ENCODE measurements at regions of chr14 and their contacts with region 1.

Region 1: GRCh38 chr14:69586404-69586803 is 11.7 kb upstream of the CCDC177 start:
- DNase-seq: no peak
- CTCF ChIP-seq: no peak

Region 2: DNA sequence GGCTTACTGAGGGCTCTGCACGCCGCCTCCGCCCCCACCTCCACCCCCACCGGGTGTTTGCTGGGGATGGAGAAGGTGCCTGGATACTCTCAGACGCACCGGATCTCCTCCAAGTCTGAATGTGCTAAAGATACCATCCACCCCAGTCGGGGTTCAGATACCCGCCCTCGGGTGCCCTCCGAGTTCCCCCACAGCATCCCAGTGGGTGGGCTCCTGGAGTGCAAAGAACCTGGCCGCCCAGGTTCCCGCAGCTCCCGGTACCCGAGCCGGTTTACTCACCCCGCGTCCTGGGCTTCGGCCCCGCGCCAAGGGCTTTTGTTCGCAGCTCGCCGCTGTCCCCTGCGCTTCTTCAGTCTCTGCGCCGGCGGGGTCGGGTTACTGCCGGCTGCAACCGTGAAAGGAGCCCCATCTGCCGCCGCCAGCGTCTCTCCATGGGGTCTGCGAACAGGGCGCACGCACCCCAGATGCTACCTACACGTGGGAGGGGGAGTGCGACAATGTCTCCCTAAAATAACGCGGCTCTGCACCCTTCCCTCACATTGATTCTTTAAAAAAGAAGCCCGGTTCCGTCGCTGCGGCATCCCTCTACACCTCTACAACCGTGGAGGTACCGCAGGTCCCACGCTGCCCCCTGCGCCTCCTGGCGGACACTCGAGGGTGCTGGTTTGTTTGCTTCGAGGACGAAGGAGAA is 12.0 kb before region 1 on chr14 and contains the start of gene CCDC177:
- CTCF ChIA-PET with region 1: interaction called, 15 read pairs
- POLR2A ChIA-PET with region 1: interaction called, 3 read pairs
- DNase-seq: peak; percentile 83
- CTCF ChIP-seq: peak; percentile 90

Region 3: DNA sequence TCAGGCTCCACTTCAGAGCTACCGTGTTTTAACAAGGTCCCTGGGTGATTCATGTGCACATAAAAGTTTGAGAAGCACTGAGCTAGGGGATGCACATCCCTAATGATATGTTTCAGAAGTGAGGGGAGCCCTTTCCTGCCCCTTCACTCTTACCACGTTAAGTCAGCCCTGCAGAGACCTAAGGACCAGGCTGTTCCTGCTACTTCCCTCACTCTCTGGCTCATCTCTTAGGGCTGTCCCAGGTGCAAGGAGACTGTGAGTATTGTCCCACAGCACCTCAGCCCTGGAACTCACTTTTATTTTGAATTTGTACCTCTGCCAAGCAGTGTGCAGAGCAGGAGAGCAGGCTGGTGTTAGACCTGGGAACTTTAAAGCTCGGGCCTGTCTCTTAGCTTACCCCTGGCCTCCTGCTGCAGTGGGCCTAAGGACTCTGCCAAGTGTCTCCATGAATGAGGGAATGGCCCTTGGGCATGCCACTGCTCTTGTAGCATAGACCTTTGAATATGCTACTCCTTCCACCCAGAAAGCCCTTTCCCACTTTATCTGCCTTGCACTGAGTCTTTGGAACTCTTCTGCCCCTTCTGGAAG is 14.0 kb after region 1 on chr14:
- CTCF ChIA-PET with region 1: interaction called, 27 read pairs
- POLR2A ChIA-PET with region 1: no interaction called
- DNase-seq: no peak
- CTCF ChIP-seq: no peak

Region 4: GRCh38 chr14:69625299-69626131 is 39.1 kb after region 1 on chr14:
- CTCF ChIA-PET with region 1: no interaction called
- POLR2A ChIA-PET with region 1: no interaction called
- DNase-seq: peak; percentile 70
- CTCF ChIP-seq: no peak

Region 5: GRCh38 chr14:69703047-69704039 is 116.9 kb after region 1 on chr14:
- CTCF ChIA-PET with region 1: interaction called, 10 read pairs
- POLR2A ChIA-PET with region 1: no interaction called
- DNase-seq: no peak
- CTCF ChIP-seq: no peak

Region 6: DNA sequence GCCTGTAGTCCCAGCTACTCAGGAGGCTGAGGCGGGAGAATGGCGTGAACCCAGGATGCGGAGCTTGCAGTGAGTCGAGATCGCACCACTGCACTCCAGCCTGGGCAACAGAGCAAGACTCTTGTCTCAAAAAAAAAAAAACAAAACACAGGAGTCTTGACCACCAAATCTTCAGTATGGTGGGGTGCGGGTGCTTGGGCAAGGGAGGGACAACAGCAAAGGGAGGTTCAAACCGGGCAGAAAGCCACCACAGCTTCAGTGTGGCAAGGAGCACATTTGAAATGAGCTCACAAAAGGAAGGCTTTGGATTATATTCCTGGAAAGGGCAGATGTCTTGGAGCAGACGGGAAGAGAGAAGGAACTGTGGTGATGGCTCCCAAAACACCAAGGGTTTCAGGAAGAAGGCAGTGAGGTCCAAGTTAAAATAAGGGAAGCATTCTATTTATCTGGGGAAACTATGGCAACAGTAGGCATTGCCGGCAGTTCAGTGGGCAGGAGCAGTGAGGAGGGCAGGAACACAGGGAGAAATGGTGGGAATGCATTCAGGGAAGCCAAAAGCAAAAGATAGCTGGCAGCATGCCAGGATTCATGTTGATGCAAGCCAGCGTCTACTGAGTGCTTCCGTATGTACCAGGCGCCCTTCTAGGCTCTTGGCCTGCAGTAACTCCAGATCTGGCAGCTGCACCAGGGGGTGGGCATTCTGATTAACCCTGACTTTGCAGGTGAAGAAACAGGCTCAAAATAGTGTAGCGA is 129.5 kb after region 1 on chr14:
- CTCF ChIA-PET with region 1: interaction called, 13 read pairs
- POLR2A ChIA-PET with region 1: no interaction called
- DNase-seq: no peak
- CTCF ChIP-seq: no peak

Measured in GM10248 (cell line).